Activated CD8-positive, alpha-beta memory T cell treated with anti-CD3 and anti-CD28 coated beads, Interleukin-2, amount 10 ng/mL, durations not matched to agents 7 days and 5 days (primary cell): ENCODE measurements at regions of chr5 and their contacts with region 1.

Region 1: GRCh38 chr5:39209924-39210323 is 9.4 kb downstream of the FYB1 start:
- DNase-seq: peak; percentile 95
- ATAC-seq: peak; percentile 75
- H3K4me3 Mint-ChIP-seq: peak overlapping the region; percentile 66
- H3K27ac Mint-ChIP-seq: peak overlapping the region; percentile 95
- H3K4me1 Mint-ChIP-seq: peaks cover 91% of the 10 kb centered on the region
- H3K27me3 Mint-ChIP-seq: no peaks in the 10 kb centered on the region

Region 2: GRCh38 chr5:38739007-38739743 is 470.7 kb before region 1 on chr5:
- CTCF ChIA-PET with region 1: no interaction called
- DNase-seq: no peak
- ATAC-seq: no peak
- H3K4me3 Mint-ChIP-seq: no peak overlapping the region
- H3K27ac Mint-ChIP-seq: no peak overlapping the region
- H3K4me1 Mint-ChIP-seq: no peaks in the 10 kb centered on the region
- H3K27me3 Mint-ChIP-seq: peaks cover 6% of the 10 kb centered on the region

Region 3: DNA sequence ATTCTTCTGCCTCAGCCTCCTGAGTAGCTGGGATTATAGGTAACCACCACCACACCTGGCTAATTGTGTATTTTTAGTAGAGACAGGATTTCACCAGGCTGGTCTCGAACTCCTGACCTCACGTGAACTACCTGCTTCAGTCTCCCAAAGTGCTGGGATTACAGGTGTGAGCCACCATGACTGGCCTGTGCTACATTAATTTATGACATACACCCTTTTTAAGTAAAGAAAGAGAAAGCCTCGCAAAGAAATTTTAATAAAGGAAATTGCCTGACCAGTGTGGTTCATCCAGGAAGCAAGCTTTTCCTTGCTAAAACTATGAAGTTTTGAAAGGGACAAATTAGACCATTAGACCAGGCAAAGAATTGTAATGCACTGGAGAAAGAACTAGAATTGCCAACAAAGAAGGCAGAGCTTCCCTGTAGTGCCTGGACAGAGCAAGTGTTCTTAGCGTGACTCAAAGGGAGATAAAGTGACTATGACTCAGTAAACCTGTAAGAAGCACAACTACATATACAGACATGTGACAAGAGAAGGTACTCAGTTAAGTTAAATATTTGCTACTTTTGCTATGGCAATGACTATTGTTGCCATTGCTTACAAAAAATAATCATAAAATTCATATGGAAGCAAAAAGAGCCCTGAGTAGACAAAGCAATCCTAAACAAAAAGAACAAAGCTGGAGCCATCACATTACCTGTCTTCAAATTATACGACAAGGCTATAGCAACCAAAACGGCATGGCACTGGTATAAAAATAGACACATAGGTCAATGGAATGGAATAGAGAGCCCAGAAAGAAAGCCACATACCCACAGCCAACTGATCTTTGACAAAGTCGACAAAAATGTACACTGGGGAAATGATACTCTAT is 45.2 kb before region 1 on chr5:
- CTCF ChIA-PET with region 1: interaction called, 11 read pairs
- DNase-seq: peak; percentile 57
- ATAC-seq: peak; percentile 93
- H3K4me3 Mint-ChIP-seq: peak overlapping the region; percentile 48
- H3K27ac Mint-ChIP-seq: peak overlapping the region; percentile 90
- H3K4me1 Mint-ChIP-seq: peaks cover 80% of the 10 kb centered on the region
- H3K27me3 Mint-ChIP-seq: no peaks in the 10 kb centered on the region

Region 4: DNA sequence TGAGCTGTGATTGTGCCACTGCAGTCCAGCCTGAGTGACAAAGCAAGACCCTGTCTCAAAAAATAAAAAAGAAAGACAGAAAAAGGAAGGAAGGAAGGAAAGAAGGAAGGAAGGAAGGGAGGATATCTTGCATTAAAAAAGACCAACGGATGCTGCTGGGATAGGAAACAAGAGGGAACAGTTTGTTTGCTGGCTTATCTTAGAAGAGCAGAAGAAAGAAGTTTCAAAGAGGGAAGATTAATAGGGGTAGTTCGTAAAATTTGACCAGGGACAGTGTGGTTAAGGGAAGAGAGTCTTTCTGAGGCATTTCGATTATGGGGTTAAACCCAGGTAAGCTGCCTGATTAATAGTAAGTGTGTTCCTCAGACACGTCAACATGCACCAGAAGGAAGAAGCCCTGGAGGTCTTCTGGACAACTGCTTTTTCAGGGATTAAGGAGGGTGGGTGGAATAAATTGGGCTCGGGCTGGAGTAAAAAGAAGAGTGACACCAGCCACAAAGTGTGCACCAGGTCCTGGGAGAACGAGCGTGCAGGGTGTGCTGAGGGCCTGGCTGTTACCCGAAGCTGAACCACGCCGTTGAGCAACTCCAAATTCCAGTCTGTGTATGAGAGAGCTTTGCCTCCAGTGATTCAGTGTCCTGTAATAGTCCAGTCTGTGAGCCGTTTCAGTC is 15.3 kb before region 1 on chr5:
- CTCF ChIA-PET with region 1: interaction called, 29 read pairs
- DNase-seq: peak; percentile 55
- ATAC-seq: peak; percentile 16
- H3K4me3 Mint-ChIP-seq: peak overlapping the region; percentile 74
- H3K27ac Mint-ChIP-seq: peak overlapping the region; percentile 79
- H3K4me1 Mint-ChIP-seq: peaks cover 74% of the 10 kb centered on the region
- H3K27me3 Mint-ChIP-seq: no peaks in the 10 kb centered on the region

Region 5: DNA sequence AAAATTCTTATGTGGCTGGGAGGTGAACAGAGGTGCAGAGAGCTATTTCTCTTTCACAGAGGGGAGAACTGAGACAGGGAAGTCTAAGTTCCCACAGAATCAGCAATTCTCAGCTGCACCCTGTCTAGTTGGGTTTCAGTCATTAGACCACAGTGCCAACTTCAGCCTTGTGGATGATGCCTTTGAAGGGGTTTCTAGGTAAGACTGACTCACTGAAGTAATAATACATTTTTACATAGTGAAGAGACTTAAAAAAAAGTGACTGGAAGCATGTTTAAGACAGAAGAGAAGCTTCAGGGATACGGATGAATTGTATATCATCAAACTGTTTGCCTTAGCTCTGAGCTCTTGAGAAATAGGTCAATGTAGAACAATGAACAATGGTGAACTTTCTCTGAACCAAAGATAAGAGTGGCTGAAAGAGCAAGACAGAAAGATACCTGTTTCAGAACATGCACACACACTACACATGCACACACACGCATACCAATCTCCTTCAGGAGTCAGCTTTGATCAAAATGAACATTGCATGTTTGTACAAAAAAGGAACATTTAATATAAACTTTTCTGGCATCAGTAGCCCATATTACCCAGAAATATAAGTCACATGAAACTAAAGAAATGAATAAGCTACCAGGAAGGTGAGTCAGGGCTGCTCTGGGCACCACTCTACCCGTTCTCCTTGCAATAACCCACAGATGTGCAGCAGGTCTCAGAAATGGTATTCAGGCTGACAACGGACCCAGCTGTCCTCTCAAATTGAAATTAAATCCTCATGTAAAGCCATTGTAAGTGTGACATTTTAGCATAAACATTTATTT is 22.0 kb after region 1 on chr5:
- CTCF ChIA-PET with region 1: no interaction called
- DNase-seq: peak; percentile 64
- ATAC-seq: peak; percentile 88
- H3K4me3 Mint-ChIP-seq: no peak overlapping the region
- H3K27ac Mint-ChIP-seq: peak overlapping the region; percentile 84
- H3K4me1 Mint-ChIP-seq: peaks cover 15% of the 10 kb centered on the region
- H3K27me3 Mint-ChIP-seq: no peaks in the 10 kb centered on the region

Region 6: GRCh38 chr5:39249069-39249468 is 39.1 kb after region 1 on chr5:
- CTCF ChIA-PET with region 1: no interaction called
- DNase-seq: no peak
- ATAC-seq: no peak
- H3K4me3 Mint-ChIP-seq: no peak overlapping the region
- H3K27ac Mint-ChIP-seq: no peak overlapping the region
- H3K4me1 Mint-ChIP-seq: no peaks in the 10 kb centered on the region
- H3K27me3 Mint-ChIP-seq: no peaks in the 10 kb centered on the region